A673 (cell line): ENCODE measurements at regions of chr6 and their contacts with region 1.

Region 1: DNA sequence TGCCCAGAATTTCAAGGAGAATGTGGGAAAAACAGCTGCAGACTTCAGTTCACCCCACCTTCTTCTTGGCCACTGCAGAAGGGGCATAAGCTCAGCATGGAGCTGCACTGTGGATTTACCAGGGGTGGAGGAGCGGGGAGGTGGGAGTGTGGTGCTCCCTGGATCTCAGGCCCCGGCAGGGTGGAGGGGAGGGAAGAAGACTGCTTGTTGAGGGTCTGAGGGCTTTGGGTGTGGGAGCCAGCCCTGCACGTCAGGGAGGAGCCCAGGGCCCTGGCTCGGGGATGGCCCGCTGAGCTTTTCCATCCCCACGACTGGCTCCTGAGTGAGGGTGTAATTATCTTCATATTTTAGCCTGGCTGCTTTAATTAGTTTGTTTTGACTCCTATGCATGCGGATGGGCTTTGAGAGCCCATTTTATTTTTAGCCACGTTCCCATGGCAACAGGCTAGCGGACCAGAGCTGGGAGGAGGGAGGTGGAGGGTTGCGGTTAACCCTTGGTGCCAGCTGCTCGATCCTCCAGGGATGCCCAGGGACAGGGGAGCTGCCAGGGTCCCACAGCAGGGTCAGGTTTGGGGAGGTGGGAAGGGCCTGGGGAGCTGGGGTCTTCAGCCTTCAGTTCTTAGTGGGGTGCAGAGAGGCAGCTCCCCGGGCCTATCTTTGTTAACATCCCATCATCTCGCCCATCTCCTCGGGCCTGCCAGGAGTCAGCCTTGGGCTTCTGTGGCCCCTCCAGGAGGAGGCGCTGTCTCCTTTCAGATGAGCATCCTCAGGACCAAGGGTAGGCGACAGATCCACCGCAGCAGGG is 68.2 kb downstream of the RAB44 start:
- DNase-seq: peak; percentile 82
- H3K4me3 ChIP-seq: no peak overlapping the region
- H3K27ac ChIP-seq: no peak overlapping the region
- H3K4me1 ChIP-seq: peaks cover 7% of the 10 kb centered on the region
- H3K27me3 ChIP-seq: no peaks in the 10 kb centered on the region
- CTCF ChIP-seq: peak; percentile 90

Region 2: GRCh38 chr6:36636283-36636682 is 129.5 kb before region 1 on chr6:
- CTCF ChIA-PET with region 1: no interaction called
- POLR2A ChIA-PET with region 1: no interaction called
- intact Hi-C with region 1: no loop called
- DNase-seq: no peak
- H3K4me3 ChIP-seq: no peak overlapping the region
- H3K27ac ChIP-seq: no peak overlapping the region
- H3K4me1 ChIP-seq: no peaks in the 10 kb centered on the region
- H3K27me3 ChIP-seq: no peaks in the 10 kb centered on the region
- CTCF ChIP-seq: no peak

Region 3: DNA sequence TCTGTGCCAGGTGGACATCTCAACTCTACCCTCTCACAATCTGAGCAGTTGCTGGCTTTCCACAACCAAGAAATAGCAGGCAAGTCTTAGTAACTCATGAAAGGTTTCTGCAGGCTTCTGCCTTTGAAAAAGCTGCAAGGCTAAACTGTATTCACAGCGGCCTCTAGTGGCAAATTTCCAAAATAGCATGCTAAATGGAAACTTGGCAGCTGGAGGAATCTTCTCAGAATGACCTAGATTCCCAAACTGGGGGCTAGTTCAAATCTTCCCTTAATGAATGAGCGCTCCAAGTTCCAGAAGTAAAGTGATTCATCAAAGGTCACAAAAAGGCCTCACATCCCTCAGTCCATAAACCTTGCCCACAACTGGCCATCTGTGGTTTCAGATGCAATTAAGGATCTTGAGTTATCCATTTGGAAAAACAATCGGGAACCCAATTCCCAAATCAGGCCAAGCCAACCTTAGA is 85.4 kb after region 1 on chr6:
- CTCF ChIA-PET with region 1: interaction called, 3 read pairs
- POLR2A ChIA-PET with region 1: no interaction called
- intact Hi-C with region 1: loop called (anchors 1 kb)
- DNase-seq: peak; percentile 80
- H3K4me3 ChIP-seq: no peak overlapping the region
- H3K27ac ChIP-seq: no peak overlapping the region
- H3K4me1 ChIP-seq: peaks cover 14% of the 10 kb centered on the region
- H3K27me3 ChIP-seq: no peaks in the 10 kb centered on the region
- CTCF ChIP-seq: peak; percentile 82

Region 4: GRCh38 chr6:36897609-36898008 is 131.8 kb after region 1 on chr6:
- CTCF ChIA-PET with region 1: interaction called, 10 read pairs
- POLR2A ChIA-PET with region 1: no interaction called
- intact Hi-C with region 1: no loop called
- DNase-seq: no peak
- H3K4me3 ChIP-seq: no peak overlapping the region
- H3K27ac ChIP-seq: no peak overlapping the region
- H3K4me1 ChIP-seq: no peaks in the 10 kb centered on the region
- H3K27me3 ChIP-seq: no peaks in the 10 kb centered on the region
- CTCF ChIP-seq: 0 out of 2 replicates have a peak, but pooled peaks have one; percentile 15

Region 5: DNA sequence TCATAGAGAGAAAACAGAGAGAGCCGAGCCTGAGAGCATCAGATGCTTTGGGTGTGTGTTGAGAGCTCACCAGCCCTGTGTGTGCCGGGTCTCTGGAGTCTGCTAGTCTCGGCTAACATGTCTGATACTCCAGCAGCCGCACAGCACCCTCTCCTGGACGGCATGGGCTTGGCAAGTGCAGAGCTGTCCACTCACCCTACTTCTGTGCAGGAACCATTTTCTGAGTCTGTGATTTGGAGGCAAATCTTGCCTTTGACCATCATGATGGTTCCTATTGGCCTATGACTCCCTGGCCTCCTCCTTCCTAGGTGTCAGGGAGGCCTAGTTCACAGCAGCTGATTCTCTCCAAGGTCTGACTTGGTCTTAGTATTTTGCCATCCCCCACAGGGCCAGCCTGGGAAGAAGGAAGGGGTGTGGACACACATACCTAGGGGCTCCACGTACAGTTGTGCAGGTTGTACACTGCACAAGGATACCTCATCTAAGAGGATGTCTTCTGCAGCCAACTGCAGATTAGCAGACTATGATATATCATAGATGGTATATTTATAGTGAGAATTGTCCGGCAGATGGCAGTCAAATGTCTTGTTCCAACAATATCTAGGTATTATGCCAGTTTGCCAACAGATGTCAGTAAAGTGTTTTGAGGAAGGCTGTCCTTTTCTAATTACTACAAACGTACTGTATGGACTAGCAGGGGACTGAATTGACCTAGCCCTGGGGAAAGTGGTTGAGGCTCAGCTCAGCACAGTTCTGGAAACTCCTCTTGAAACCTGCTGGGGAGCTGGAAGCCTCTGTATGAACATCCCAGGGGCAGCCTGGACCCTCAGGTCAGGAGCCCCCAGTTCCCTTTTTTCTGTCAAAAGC is 252.6 kb after region 1 on chr6:
- CTCF ChIA-PET with region 1: interaction called, 9 read pairs
- POLR2A ChIA-PET with region 1: no interaction called
- intact Hi-C with region 1: loop called (anchors 1 kb)
- DNase-seq: peak; percentile 89
- H3K4me3 ChIP-seq: no peak overlapping the region
- H3K27ac ChIP-seq: no peak overlapping the region
- H3K4me1 ChIP-seq: no peaks in the 10 kb centered on the region
- H3K27me3 ChIP-seq: no peaks in the 10 kb centered on the region
- CTCF ChIP-seq: peak; percentile 87